Sigmoid colon (tissue), 7 donors: ENCODE measurements at regions of chr12 and their contacts with region 1.

Region 1: DNA sequence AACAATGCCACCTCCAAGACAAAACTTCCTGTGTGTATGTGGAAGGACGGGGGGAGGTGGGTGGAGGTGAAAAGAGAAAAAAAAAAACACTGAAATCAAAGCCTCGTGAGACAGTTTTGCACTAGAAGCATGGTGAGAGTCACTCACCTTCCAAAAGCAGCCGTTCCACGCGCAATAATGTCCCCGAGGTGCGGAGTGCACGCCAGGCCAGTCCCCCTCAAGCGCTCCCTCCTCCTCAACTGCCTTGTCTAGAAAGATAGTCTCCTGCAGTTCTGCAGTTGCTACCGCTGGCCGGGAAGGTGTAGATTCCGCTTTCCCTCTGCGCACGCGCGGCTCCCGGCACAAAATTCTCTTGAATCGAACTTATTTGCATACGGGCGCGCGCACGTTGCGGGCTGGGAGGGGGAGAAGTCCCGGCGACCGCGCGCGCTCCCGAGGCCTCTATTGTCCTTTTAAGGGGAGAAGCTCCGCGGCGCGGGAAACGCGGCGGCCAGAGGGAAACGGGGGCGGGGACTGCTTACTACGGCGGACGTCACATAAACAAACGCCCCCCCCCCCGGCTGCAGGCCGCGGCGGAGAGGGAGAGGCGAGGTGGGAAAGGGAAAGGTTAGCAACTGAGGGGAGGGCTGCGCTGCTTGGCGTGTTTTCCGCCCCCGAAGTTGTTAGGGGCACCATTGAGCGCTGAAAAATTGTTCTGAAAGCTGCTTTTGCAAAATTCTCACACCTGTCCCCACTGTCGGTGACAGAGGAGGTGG is at the start of gene SINHCAF:
- DNase-seq: peak; percentile 100
- H3K4me3 ChIP-seq: peak within 1 kb of the TSS; percentile 71 to 88 (median 75)
- H3K27ac ChIP-seq: peak within 1 kb of the TSS; percentile 90 to 96 (median 94)
- H3K4me1 ChIP-seq: peaks cover 0 to 14% (median 3%) of the 10 kb centered on the region in 4 donors
- H3K27me3 ChIP-seq: no peaks in the 10 kb centered on the region
- CTCF ChIP-seq: no peak
- EP300 ChIP-seq: peak in 2 of 4 donors; percentile 39 to 40
- POLR2A ChIP-seq: peak; percentile 86 to 93
- total RNA-seq, gene SINHCAF: 38.2 to 68.4 (median 51.8) TPM

Region 2: DNA sequence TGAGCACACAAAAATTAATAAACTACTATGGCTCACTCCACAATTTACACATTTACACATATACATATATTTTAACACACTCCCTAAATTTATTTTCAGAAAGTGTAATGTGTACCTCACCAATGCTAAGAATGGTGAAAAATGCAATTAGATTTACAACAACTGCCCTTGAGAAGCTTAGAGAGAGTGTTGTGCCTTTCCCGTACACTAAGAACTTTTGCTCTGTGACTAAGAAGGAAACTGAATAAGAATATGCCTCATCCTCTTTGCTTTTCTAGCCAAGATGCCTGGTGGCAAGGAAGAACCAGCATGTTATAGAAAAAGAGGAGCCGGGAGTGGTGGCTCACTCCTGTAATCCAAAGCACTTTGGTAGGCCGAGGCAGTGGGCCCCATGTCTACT is 62.4 kb before region 1 on chr12:
- intact Hi-C with region 1: no loop called
- DNase-seq: no peak
- H3K4me3 ChIP-seq: no peak overlapping the region
- H3K27ac ChIP-seq: no peak overlapping the region
- H3K4me1 ChIP-seq: no peaks in the 10 kb centered on the region
- H3K27me3 ChIP-seq: no peaks in the 10 kb centered on the region
- CTCF ChIP-seq: no peak
- EP300 ChIP-seq: no peak
- POLR2A ChIP-seq: no peak

Region 3: DNA sequence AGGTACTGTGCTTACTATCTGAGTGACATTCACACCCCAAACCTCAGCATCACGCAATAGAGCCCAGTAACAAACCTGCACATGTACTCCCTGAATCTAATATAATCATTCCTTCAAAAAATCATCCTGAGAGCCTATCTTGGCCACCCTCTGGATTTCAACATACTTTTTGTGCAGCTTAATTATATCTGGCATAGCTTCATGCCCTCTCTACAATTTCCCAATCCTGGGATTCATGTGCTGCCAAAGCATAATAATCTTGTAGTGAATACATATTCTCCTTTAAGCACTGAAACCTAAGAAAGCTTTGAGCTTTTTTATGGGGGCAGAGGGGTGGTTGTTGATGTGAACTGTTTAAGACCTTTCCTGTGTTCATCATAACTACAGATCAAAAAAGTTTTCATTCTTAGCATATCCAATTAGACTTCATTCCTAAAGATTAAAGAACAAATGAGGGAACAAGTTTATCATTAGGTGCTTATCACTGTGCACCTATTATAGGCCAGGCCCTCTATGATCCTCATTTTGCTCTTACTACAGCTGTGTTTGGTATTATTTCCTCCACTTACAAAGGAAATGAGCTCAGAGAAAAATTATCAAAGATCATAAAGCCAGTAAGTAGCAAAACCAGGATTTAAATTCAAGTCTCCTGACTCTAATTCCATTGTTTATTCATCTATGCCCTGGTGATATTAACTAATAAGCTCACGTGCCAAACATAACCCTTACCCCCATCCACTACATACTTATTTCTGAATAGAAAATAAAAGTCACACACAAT is 51.3 kb before region 1 on chr12:
- intact Hi-C with region 1: loop called (anchors 5 kb)
- DNase-seq: no peak
- H3K4me3 ChIP-seq: no peak overlapping the region
- H3K27ac ChIP-seq: no peak overlapping the region
- H3K4me1 ChIP-seq: peaks cover 0 to 20% (median 10%) of the 10 kb centered on the region in 4 donors
- H3K27me3 ChIP-seq: no peaks in the 10 kb centered on the region
- CTCF ChIP-seq: no peak
- EP300 ChIP-seq: no peak
- POLR2A ChIP-seq: no peak

Region 4: GRCh38 chr12:31589904-31590641 is 264.0 kb after region 1 on chr12:
- intact Hi-C with region 1: loop called (anchors 1 kb)
- DNase-seq: peak; percentile 84
- H3K4me3 ChIP-seq: peak overlapping the region; percentile 61 to 97 (median 94)
- H3K27ac ChIP-seq: peak overlapping the region; percentile 96 to 99 (median 98)
- H3K4me1 ChIP-seq: peaks cover 0 to 36% (median 14%) of the 10 kb centered on the region in 4 donors
- H3K27me3 ChIP-seq: no peaks in the 10 kb centered on the region
- CTCF ChIP-seq: no peak
- EP300 ChIP-seq: no peak
- POLR2A ChIP-seq: no peak

Region 5: DNA sequence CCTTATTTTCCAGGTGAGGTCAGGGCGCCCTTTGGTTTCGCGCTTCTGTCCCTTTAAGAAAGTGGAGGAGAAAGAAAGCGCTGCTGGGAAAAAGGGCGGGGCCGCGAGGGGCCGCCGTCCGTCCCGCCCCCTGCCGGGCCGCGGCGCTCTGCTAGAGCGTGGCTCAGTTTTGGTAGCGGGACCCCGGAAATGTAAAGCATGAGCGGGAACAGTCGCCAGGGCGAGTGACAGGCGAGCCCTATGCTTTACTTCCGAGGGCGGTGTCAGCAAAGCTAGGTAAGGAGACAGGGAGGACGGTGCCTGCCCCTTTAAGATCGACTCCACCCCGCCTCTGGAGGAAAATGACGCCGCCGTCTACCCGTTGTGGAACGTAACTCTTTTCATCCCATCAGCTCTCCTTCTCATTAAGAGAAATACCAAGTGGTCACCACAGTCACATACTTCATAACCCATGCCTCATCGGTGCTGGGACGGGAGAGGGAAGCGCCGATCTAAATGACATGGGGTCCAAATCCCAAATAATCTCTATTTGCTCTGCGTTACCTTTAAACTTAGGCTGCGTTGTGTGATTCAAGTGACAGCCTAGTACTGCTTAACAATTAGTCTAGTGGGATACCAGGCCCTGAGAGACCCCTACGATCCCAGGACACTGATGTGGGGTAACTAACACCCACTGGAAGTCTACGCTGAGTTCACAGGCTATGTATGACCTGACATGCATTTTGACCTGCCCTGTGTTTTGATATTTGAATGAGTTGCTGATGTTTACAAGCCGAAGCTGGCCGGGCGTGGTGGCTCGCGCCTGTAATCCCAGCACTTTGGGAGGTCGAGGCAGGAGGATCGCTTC is 333.3 kb after region 1 on chr12 and contains the start of gene ETFBKMT:
- intact Hi-C with region 1: loop called (anchors 5 kb)
- DNase-seq: peak; percentile 94
- H3K4me3 ChIP-seq: peak within 1 kb of the TSS; percentile 61 to 75 (median 70)
- H3K27ac ChIP-seq: peak within 1 kb of the TSS; percentile 91 to 96 (median 94)
- H3K4me1 ChIP-seq: peaks cover 0 to 6% (median 4%) of the 10 kb centered on the region in 4 donors
- H3K27me3 ChIP-seq: no peaks in the 10 kb centered on the region
- CTCF ChIP-seq: peak in 2 of 4 experiments; percentile 28 to 63
- EP300 ChIP-seq: no peak
- POLR2A ChIP-seq: no peak
- total RNA-seq, gene ETFBKMT: 2.5 to 4.4 (median 3.0) TPM

Region 6: DNA sequence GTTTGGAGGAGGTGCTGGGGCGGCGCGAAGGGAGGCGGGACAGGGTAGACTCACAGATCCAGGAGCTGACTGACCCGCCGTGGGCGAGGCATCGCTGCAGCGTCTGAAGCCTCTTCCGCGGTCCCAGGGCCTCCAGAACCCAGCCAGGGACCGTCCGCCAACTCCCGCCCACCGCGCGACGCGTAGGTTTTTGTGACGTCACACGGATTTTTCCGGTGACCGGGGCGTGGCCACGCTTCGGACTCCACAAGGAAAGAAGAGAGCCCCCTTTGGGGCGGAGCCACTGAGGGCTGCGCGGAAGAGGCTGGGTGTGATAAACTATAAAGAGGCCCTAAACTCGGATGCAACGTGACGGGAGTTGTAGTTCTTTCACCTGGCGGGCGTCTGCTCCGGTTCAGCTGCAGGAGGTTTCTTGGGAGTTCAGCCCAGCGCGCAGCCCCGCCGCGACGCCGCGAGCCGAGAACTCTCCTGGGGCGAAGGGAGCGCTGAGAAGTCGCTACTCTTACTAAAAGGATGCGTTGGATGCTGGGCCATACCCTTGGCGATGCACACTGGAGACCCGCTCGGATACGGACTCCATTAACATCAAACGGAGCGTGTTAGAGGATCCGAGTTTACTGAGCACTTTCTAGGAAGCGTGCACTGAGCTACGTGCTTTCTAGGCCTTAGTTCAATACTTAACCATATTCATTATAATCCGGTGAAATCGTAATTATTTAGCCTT is 403.0 kb after region 1 on chr12 and contains the start of gene AMN1:
- intact Hi-C with region 1: loop called (anchors 5 kb)
- DNase-seq: peak; percentile 99
- H3K4me3 ChIP-seq: peak within 1 kb of the TSS; percentile 61 to 69 (median 65)
- H3K27ac ChIP-seq: peak within 1 kb of the TSS; percentile 88 to 97 (median 92)
- H3K4me1 ChIP-seq: peaks cover 0 to 14% (median 12%) of the 10 kb centered on the region in 4 donors
- H3K27me3 ChIP-seq: no peaks in the 10 kb centered on the region
- CTCF ChIP-seq: no peak
- EP300 ChIP-seq: peak in 1 of 4 donors; percentile 60
- POLR2A ChIP-seq: peak; percentile 4 to 71
- total RNA-seq, gene AMN1: 5.5 to 13.2 (median 11.0) TPM

Region 7: GRCh38 chr12:32106517-32107358 is 780.7 kb after region 1 on chr12 and contains the start of gene BICD1:
- intact Hi-C with region 1: loop called (anchors 5 kb)
- DNase-seq: peak; percentile 95
- H3K4me3 ChIP-seq: peak within 1 kb of the TSS; percentile 75 to 98 (median 80)
- H3K27ac ChIP-seq: peak within 1 kb of the TSS; percentile 92 to 98 (median 96)
- H3K4me1 ChIP-seq: peaks cover 0 to 31% (median 23%) of the 10 kb centered on the region in 4 donors
- H3K27me3 ChIP-seq: no peaks in the 10 kb centered on the region
- CTCF ChIP-seq: peak in 1 of 4 experiments; percentile 38
- EP300 ChIP-seq: no peak
- POLR2A ChIP-seq: peak in 1 of 2 donors; percentile 73
- total RNA-seq, gene BICD1: 9.4 to 16.0 (median 12.0) TPM